Activated CD8-positive, alpha-beta T cell treated with anti-CD3 and anti-CD28 coated beads, Interleukin-2, amount 10 ng/mL, durations not matched to agents 7 days and 5 days (primary cell): ENCODE measurements at regions of chr10 and their contacts with region 1.

Region 1: GRCh38 chr10:98425511-98426352 is 10.8 kb upstream of the PYROXD2 start:
- DNase-seq: peak; percentile 48
- ATAC-seq: peak; percentile 59
- H3K4me3 Mint-ChIP-seq: no peak overlapping the region
- H3K27ac Mint-ChIP-seq: no peak overlapping the region
- H3K4me1 Mint-ChIP-seq: no peaks in the 10 kb centered on the region
- H3K27me3 Mint-ChIP-seq: no peaks in the 10 kb centered on the region

Region 2: GRCh38 chr10:98269072-98269912 is 156.4 kb before region 1 on chr10:
- CTCF ChIA-PET with region 1: no interaction called
- POLR2A ChIA-PET with region 1: no interaction called
- DNase-seq: no peak
- ATAC-seq: no peak
- H3K4me3 Mint-ChIP-seq: no peak overlapping the region
- H3K27ac Mint-ChIP-seq: no peak overlapping the region
- H3K4me1 Mint-ChIP-seq: peaks cover 4% of the 10 kb centered on the region
- H3K27me3 Mint-ChIP-seq: peaks cover 39% of the 10 kb centered on the region

Region 3: DNA sequence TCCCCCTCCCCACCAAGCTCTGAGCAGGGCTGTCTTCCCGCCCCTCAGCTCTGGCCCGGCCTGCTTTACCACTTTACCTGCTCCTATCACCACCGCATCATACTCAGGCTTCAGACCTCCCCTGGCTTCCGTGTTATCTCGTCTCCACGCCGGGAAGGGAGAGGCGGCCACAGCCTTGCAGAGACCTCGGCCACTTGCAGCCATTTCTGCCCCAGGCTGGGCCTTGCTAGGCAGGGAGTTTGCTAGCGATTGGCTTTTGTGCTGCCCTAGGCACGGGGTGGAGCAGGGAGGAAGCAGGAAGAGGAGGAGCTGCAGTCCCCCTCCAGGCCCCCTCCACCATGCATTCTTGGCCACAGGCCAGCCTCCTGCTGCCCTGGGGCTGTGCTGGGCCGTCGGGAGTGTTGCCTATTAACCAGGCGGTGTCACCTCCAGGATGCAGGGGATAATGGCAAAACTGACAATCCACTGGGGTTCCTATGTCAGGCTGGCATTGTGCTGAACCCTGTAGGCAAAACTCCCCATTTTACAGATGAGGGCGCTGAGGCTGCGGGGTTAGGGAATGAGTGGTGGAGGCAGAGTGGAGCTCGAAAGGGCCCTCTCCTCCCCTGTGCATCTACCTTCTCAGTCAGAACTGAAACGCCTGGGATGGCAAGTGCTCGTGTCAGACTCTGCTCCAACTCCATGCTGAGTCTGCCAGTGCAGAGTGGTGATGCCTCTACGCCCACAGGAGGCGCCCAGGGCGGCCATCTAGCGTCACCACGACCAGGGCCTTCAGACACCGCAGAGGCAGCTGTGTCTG is 10.6 kb before region 1 on chr10 and contains the start of gene PYROXD2:
- CTCF ChIA-PET with region 1: interaction called, 22 read pairs
- POLR2A ChIA-PET with region 1: interaction called, 3 read pairs
- DNase-seq: peak; percentile 76
- ATAC-seq: peak; percentile 92
- H3K4me3 Mint-ChIP-seq: peak within 1 kb of the TSS; percentile 88
- H3K27ac Mint-ChIP-seq: peak within 1 kb of the TSS; percentile 97
- H3K4me1 Mint-ChIP-seq: peaks cover 14% of the 10 kb centered on the region
- H3K27me3 Mint-ChIP-seq: no peaks in the 10 kb centered on the region
- total RNA-seq, gene PYROXD2: 8.3 to 9.3 TPM

Region 4: DNA sequence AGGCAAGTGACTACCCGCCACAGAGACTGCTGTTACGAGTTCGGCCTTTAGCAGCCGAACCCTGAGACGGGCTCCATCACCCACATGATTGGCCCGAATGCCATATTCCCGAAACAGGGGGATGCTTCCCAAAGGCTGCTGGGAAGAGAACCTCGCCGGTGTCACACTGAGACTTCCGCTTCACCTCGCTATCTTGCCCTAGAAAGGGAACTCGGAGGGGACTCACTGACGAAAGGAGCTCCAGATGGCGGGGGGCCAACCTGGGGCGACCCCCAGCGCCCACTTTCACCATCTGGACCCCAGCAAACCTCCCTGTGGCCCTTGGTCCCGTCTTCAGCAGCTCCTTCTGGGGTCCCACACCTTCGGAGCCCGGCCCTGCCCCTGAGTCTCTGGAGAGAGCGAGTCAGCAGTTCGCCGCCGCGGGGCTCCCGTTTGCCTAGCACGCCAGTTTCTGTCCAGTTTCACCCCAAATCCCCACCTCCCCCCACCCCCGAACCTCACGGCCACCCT is 20.5 kb after region 1 on chr10:
- CTCF ChIA-PET with region 1: interaction called, 10 read pairs
- POLR2A ChIA-PET with region 1: no interaction called
- DNase-seq: peak; percentile 56
- ATAC-seq: peak; percentile 33
- H3K4me3 Mint-ChIP-seq: peak overlapping the region; percentile 95
- H3K27ac Mint-ChIP-seq: peak overlapping the region; percentile 92
- H3K4me1 Mint-ChIP-seq: peaks cover 39% of the 10 kb centered on the region
- H3K27me3 Mint-ChIP-seq: peaks cover 6% of the 10 kb centered on the region

Region 5: DNA sequence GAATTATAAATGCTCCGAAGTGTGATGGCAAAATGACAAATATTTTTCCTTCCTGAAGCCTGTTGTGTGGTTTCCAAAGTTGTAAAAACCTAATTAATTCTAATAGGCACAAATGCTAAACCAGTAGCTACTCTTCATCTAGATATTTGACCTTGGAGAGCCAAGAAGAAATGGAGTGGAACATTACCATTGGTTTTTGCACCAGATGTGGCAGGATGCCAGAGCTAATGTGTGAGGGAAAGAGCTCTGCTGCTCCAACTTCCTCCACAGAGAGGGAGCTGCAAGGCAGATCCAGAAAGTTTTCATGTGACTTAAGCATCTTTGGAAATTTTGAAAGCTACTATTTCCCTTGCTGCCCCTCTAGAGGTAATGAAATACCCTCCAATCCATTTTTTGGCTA is 86.1 kb after region 1 on chr10:
- CTCF ChIA-PET with region 1: no interaction called
- POLR2A ChIA-PET with region 1: no interaction called
- DNase-seq: no peak
- ATAC-seq: no peak
- H3K4me3 Mint-ChIP-seq: no peak overlapping the region
- H3K27ac Mint-ChIP-seq: no peak overlapping the region
- H3K4me1 Mint-ChIP-seq: no peaks in the 10 kb centered on the region
- H3K27me3 Mint-ChIP-seq: peaks cover 5% of the 10 kb centered on the region